ENCODE measurements at regions of chr1 and their contacts with region 1.

Region 1: DNA sequence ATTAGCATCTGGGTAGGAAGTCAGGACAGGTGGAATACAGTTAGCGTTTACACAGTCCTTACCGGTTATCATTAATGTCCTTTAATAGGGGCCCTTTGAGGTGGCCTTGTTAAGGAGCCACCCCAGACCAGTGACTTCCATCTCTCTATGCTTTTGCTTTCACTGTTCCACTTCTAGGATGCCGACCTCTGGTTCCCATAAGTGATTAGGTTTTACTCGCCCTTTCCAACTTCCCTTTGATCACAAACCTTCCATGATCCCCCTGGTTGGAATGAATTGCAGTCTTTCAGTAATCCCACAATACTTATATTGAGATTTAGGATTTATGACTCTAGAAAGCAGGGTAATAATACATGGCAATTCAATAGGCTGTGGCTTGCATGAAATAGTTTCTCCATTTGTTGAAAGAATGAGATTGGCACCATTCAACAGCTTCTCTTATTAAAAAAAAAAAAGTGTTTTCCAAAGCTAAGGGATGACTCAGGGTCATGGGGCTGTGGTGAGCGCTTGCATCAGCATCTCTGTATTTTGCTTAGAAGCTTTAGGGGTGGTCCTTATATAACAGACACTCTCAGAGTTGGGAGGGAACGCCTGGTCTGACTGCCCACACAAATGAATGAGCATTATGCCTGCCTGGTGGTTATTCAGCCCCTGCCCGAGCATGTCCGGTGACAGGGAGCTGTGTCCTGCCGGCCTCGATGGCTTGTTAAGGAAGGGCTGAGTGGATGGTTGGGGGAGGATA is 110.5 kb downstream of the CNIH3 start:
- DNase-seq: peak; percentile 85
- H3K4me3 ChIP-seq: no peak overlapping the region
- H3K27ac ChIP-seq: peak overlapping the region; percentile 76
- H3K27me3 ChIP-seq: no peaks in the 10 kb centered on the region
- CTCF ChIP-seq: no peak

Region 2: DNA sequence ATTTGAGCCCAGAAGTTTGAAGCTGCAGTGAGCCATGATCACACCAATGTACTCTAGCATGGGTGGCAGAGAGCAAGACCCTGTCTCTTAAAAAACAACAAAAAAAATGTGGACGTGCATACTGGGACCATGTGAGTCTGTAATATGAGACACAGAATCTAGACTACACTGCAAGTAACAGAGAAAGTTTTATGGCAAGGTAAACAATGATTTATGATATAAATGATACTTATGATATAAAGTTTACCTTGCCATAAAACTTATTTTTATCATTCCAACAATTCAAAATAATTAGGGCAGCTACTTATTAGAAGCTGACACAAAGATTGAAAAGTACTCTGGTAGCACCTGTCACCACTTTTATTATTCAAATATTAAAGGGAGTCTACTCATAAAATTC is 326.7 kb before region 1 on chr1:
- CTCF ChIA-PET with region 1: interaction called, 10 read pairs
- POLR2A ChIA-PET with region 1: no interaction called
- DNase-seq: no peak
- H3K4me3 ChIP-seq: no peak overlapping the region
- H3K27ac ChIP-seq: no peak overlapping the region
- H3K27me3 ChIP-seq: no peaks in the 10 kb centered on the region
- CTCF ChIP-seq: no peak

Region 3: GRCh38 chr1:224710196-224710595 is 16.4 kb before region 1 on chr1:
- CTCF ChIA-PET with region 1: no interaction called
- POLR2A ChIA-PET with region 1: no interaction called
- DNase-seq: no peak
- H3K4me3 ChIP-seq: no peak overlapping the region
- H3K27ac ChIP-seq: no peak overlapping the region
- H3K27me3 ChIP-seq: no peaks in the 10 kb centered on the region
- CTCF ChIP-seq: no peak

Measured in AG04450 (cell line).